ENCODE measurements at regions of chr7 and their contacts with region 1.

Region 1: DNA sequence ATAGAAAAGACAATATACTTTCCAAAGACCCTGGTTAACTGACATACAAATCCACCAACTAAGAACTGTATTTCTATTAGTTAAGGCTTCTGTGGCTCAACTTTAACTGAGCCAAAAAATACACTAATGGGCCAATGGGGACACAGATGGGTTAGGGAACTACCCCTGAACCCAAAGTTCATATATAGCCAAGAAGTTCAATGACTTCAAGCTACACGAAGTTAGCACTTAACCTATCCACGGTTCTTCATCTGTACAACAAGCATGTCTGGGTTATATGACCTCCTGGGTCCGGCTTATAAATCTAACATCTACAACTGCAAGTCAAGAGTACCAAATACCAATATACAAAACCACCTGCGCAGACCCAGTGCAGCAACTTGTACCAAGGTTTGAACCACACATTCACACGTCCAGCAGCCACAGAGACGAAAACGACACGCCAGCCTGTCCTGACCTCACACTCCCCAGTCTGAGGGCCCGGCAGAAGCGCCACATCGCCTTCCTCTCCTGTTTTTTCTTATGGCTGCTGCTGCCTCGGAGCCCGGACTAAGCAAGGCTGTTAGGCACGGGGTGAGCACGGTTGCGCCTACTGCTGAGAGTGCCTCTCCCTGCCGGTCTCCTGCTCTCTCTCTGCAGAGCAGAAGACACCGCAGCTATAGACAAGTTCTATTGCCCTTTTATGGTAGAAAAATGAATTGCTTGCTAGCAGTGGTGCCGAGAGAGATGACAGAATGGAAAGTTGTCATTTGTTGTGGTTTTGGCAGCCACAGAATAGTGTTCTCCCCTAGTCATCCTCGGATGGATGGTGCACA is 86.3 kb downstream of the RNF216 start:
- DNase-seq: no peak
- ATAC-seq: peak; percentile 48
- H3K4me3 Mint-ChIP-seq: peak overlapping the region; percentile 87
- H3K27ac Mint-ChIP-seq: peak overlapping the region; percentile 91
- H3K4me1 Mint-ChIP-seq: peaks cover 100% of the 10 kb centered on the region
- H3K27me3 Mint-ChIP-seq: no peaks in the 10 kb centered on the region
- CTCF ChIP-seq: no peak

Region 2: GRCh38 chr7:4519819-4520525 is 1175.1 kb before region 1 on chr7:
- CTCF ChIA-PET with region 1: no interaction called
- POLR2A ChIA-PET with region 1: no interaction called
- intact Hi-C with region 1: no loop called
- DNase-seq: no peak
- ATAC-seq: no peak
- H3K4me3 Mint-ChIP-seq: no peak overlapping the region
- H3K27ac Mint-ChIP-seq: no peak overlapping the region
- H3K4me1 Mint-ChIP-seq: no peaks in the 10 kb centered on the region
- H3K27me3 Mint-ChIP-seq: peaks cover 4% of the 10 kb centered on the region
- CTCF ChIP-seq: no peak

Region 3: DNA sequence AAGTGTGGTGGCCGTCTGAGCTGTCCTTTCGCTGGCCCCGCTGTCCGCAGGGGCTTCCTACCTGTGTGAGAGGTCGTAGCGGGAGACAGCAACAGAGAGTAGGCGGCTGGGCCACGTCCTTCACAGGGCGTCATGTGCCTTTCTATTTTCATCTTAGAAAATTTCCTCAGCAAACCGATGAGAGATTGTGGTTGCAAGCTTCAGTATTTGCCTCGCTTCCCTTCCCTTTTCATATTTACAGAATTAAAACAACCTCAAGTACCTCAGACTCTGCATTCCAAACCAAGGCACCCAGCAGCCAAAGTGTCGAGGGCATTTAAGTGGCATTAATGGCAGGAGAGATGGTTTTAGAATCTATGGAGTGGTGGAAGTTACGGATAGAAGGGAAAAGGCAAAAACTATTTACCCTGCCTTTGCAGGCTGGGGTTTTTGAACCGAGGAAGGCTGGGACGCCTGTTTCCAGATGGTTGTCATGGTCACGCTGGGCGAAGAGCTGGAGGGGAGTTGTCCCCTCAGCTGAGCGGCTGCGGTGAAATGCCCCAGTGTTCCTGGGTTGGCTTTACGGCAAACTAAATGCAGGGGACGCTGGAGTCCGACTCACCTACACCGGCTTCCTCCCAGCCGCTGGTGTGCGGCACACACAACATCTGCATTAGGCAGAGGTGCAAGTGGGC is 463.2 kb before region 1 on chr7:
- CTCF ChIA-PET with region 1: interaction called, 5 read pairs
- POLR2A ChIA-PET with region 1: interaction called, 8 read pairs
- intact Hi-C with region 1: loop called (anchors 2 kb)
- DNase-seq: peak; percentile 60
- ATAC-seq: peak; percentile 65
- H3K4me3 Mint-ChIP-seq: peak overlapping the region; percentile 81
- H3K27ac Mint-ChIP-seq: peak overlapping the region; percentile 99
- H3K4me1 Mint-ChIP-seq: peaks cover 75% of the 10 kb centered on the region
- H3K27me3 Mint-ChIP-seq: no peaks in the 10 kb centered on the region
- CTCF ChIP-seq: no peak

Region 4: DNA sequence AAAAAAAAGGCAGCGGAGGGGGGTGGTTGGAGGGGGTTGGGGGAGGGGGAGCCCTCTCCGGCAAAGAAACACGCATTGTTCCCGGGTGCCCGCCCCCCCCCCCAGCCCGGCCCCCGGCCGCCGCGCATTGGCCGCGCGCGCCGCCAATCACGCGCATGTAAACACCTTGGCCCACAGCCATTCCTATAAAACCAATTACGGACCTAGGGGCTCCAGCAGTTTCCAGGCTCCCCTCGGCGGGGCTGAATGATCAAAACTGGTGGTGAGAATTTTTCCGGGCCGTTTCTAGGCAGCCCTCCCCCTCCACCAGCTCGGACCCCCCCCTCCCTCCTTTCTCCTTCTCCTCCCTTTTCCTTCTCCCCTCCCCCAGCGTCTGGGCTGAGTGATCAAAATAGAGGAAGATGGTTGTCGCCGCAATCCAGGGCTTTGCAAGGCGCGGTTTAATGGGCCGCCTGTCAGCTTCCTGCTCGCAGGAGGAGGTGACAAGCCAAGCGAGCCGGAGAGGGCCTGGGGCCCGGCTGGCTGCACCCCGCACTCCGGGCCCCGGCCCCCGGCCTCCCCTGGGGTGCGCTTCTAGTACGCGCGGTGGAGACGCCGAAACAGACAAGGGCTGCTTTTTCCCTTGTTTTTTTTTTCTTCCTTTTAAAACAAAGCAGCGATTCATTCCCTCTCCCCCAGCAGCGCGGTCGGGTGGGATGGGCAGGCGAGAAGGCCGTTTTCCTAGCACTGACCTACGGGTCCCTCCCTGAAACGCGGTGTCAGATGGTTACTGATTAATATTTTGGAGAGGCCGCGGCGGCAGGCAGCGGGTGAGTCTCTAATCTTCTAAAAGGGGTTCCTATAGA is 271.1 kb before region 1 on chr7:
- CTCF ChIA-PET with region 1: no interaction called
- POLR2A ChIA-PET with region 1: interaction called, 3 read pairs
- intact Hi-C with region 1: loop called (anchors 5 kb)
- DNase-seq: peak; percentile 40
- ATAC-seq: peak; percentile 58
- H3K4me3 Mint-ChIP-seq: peak overlapping the region; percentile 83
- H3K27ac Mint-ChIP-seq: peak overlapping the region; percentile 65
- H3K4me1 Mint-ChIP-seq: peaks cover 61% of the 10 kb centered on the region
- H3K27me3 Mint-ChIP-seq: peaks cover 25% of the 10 kb centered on the region
- CTCF ChIP-seq: no peak

Region 5: DNA sequence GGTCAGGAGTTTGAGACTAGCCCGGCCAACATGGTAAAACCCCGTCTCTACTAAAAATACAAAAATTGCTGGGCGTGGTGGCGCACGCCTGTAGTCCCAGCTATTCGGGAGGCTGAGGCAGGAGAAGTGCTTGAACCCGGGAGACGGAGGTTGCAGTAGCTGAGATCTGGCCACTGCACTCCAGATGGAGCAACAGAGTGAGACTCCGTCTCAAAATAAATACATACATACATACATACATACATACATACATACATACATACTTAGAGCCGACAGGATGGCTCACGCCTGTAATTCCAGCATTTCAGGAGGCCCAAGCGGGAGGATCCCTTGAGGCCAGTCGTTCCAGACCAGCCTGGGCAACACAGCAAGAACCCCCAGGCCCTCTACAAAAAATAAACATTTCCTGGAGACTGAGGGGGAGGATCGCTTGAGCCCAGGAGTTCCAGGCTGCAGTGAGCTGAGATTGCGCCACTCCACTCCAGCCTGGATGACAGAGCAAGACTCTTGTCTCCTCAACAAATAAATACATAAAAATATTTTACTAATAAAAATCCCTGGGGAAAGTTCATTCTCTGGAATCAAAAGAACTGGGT is 180.6 kb before region 1 on chr7:
- CTCF ChIA-PET with region 1: no interaction called
- POLR2A ChIA-PET with region 1: interaction called, 13 read pairs
- intact Hi-C with region 1: no loop called
- DNase-seq: no peak
- ATAC-seq: no peak
- H3K4me3 Mint-ChIP-seq: peak overlapping the region; percentile 98
- H3K27ac Mint-ChIP-seq: peak overlapping the region; percentile 97
- H3K4me1 Mint-ChIP-seq: peaks cover 27% of the 10 kb centered on the region
- H3K27me3 Mint-ChIP-seq: no peaks in the 10 kb centered on the region
- CTCF ChIP-seq: no peak

Region 6: GRCh38 chr7:5532520-5533335 is 162.4 kb before region 1 on chr7:
- CTCF ChIA-PET with region 1: no interaction called
- POLR2A ChIA-PET with region 1: interaction called, 10 read pairs
- intact Hi-C with region 1: loop called (anchors 1 kb)
- DNase-seq: peak; percentile 78
- ATAC-seq: peak; percentile 41
- H3K4me3 Mint-ChIP-seq: peak overlapping the region; percentile 95
- H3K27ac Mint-ChIP-seq: peak overlapping the region; percentile 97
- H3K4me1 Mint-ChIP-seq: peaks cover 43% of the 10 kb centered on the region
- H3K27me3 Mint-ChIP-seq: no peaks in the 10 kb centered on the region
- CTCF ChIP-seq: no peak

Region 7: DNA sequence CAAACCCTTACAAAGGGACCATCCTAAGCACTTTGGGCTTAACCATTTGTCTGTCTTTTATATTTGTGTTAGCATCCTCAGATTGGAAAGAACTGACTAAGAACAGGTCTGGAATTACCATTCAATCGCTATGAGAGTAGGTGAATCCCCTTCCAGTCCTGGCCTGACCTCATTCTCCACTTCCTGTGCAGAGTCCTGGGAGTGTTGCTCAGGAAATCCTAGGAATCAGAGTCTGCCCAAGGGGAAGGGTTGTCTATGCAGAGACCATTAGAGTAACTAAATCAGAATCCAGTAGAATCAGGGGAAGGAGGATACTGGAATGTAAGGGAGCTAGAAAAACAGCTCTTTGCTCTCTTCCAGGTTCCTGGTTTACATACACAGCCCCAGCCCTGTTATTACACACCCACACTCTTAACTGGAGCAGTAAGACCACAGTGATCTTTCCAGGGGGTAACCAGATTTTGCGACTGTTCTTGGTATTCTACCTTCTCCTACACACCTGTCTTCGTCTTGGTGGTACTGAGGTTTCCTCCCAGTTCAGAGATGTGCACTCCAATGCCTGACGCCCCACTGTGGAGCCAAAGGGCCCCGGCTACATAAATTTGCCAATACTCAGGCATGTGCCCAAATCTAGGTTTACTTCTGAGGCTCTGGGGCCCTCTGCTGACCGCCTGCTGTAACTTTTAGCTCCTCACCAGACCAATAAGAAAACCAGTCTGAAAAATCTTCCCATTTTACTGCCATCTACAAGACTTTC is 17.4 kb before region 1 on chr7:
- CTCF ChIA-PET with region 1: interaction called, 48 read pairs
- POLR2A ChIA-PET with region 1: interaction called, 112 read pairs
- intact Hi-C with region 1: loop called (anchors 1 kb)
- DNase-seq: no peak
- ATAC-seq: peak; percentile 41
- H3K4me3 Mint-ChIP-seq: no peak overlapping the region
- H3K27ac Mint-ChIP-seq: peak overlapping the region; percentile 73
- H3K4me1 Mint-ChIP-seq: peaks cover 55% of the 10 kb centered on the region
- H3K27me3 Mint-ChIP-seq: no peaks in the 10 kb centered on the region
- CTCF ChIP-seq: peak; percentile 29

Region 8: GRCh38 chr7:5872326-5872725 is 177.2 kb after region 1 on chr7:
- CTCF ChIA-PET with region 1: no interaction called
- POLR2A ChIA-PET with region 1: no interaction called
- intact Hi-C with region 1: no loop called
- DNase-seq: no peak
- ATAC-seq: no peak
- H3K4me3 Mint-ChIP-seq: no peak overlapping the region
- H3K27ac Mint-ChIP-seq: no peak overlapping the region
- H3K4me1 Mint-ChIP-seq: no peaks in the 10 kb centered on the region
- H3K27me3 Mint-ChIP-seq: peaks cover 5% of the 10 kb centered on the region
- CTCF ChIP-seq: no peak